CD8-positive, alpha-beta T cell (primary cell): ENCODE measurements at regions of chr2 and their contacts with region 1.

Region 1: GRCh38 chr2:23939987-23940717 is at the start of gene UBXN2A:
- DNase-seq: peak; percentile 53 to 92 (median 70)
- ATAC-seq: peak; percentile 82
- H3K4me3 ChIP-seq: peak within 1 kb of the TSS; percentile 90 to 97
- H3K4me3 Mint-ChIP-seq: peak within 1 kb of the TSS; percentile 94
- H3K27ac ChIP-seq: peak within 1 kb of the TSS; percentile 59 to 64
- H3K27ac Mint-ChIP-seq: peak within 1 kb of the TSS; percentile 88
- H3K4me1 ChIP-seq: peaks cover 6% of the 10 kb centered on the region
- H3K4me1 Mint-ChIP-seq: peaks cover 33% of the 10 kb centered on the region
- H3K27me3 ChIP-seq: no peaks in the 10 kb centered on the region
- H3K27me3 Mint-ChIP-seq: no peaks in the 10 kb centered on the region
- CTCF ChIP-seq: no peak
- total RNA-seq, gene UBXN2A: 17.7 to 18.0 TPM

Region 2: DNA sequence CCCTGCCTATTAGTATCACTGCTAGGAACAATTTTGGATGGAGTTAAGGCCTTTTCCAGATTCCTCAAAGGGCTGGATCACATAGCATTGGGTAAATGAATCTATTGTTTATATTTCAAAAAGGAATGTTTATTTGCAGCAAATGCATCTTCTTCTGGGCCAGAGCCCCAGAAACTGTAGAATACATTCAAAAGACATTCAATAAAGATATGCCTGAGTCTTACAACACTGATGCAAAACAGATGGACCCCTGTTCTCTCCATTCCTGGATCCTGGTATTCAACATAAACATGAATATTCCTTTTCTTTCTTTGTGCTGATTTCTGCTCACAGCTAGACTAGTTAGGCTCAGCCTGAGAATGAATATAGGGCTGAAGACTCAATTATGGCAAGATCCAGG is 782.3 kb before region 1 on chr2:
- CTCF ChIA-PET with region 1: no interaction called
- POLR2A ChIA-PET with region 1: no interaction called
- intact Hi-C with region 1: no loop called
- DNase-seq: no peak
- ATAC-seq: no peak
- H3K4me3 ChIP-seq: no peak overlapping the region
- H3K4me3 Mint-ChIP-seq: no peak overlapping the region
- H3K27ac ChIP-seq: no peak overlapping the region
- H3K27ac Mint-ChIP-seq: no peak overlapping the region
- H3K4me1 ChIP-seq: no peaks in the 10 kb centered on the region
- H3K4me1 Mint-ChIP-seq: no peaks in the 10 kb centered on the region
- H3K27me3 ChIP-seq: no peaks in the 10 kb centered on the region
- H3K27me3 Mint-ChIP-seq: peaks cover 4% of the 10 kb centered on the region
- CTCF ChIP-seq: no peak

Region 3: GRCh38 chr2:24046930-24047702 is 107.0 kb after region 1 on chr2 and contains the start of gene WDCP:
- CTCF ChIA-PET with region 1: no interaction called
- POLR2A ChIA-PET with region 1: interaction called, 4 read pairs
- intact Hi-C with region 1: loop called in 1 of 2 experiments (anchors 1 kb)
- DNase-seq: peak; percentile 81 to 98 (median 92)
- ATAC-seq: peak; percentile 98
- H3K4me3 ChIP-seq: peak within 1 kb of the TSS; percentile 80 to 87
- H3K4me3 Mint-ChIP-seq: peak within 1 kb of the TSS; percentile 93
- H3K27ac ChIP-seq: peak within 1 kb of the TSS; percentile 54 to 56
- H3K27ac Mint-ChIP-seq: peak within 1 kb of the TSS; percentile 90
- H3K4me1 ChIP-seq: peaks cover 21% of the 10 kb centered on the region
- H3K4me1 Mint-ChIP-seq: peaks cover 35% of the 10 kb centered on the region
- H3K27me3 ChIP-seq: no peaks in the 10 kb centered on the region
- H3K27me3 Mint-ChIP-seq: peaks cover 2% of the 10 kb centered on the region
- CTCF ChIP-seq: no peak
- total RNA-seq, gene WDCP: 3.7 to 4.8 TPM

Region 4: GRCh38 chr2:24360050-24360962 is 420.2 kb after region 1 on chr2 and contains the start of gene ITSN2:
- CTCF ChIA-PET with region 1: no interaction called
- POLR2A ChIA-PET with region 1: no interaction called
- intact Hi-C with region 1: loop called in 1 of 2 experiments (anchors 5 kb)
- DNase-seq: peak; percentile 63 to 95 (median 82)
- ATAC-seq: peak; percentile 83
- H3K4me3 ChIP-seq: peak within 1 kb of the TSS; percentile 79 to 94
- H3K4me3 Mint-ChIP-seq: peak within 1 kb of the TSS; percentile 96
- H3K27ac ChIP-seq: peak within 1 kb of the TSS; percentile 93 to 95
- H3K27ac Mint-ChIP-seq: peak within 1 kb of the TSS; percentile 95
- H3K4me1 ChIP-seq: peaks cover 20% of the 10 kb centered on the region
- H3K4me1 Mint-ChIP-seq: peaks cover 31% of the 10 kb centered on the region
- H3K27me3 ChIP-seq: no peaks in the 10 kb centered on the region
- H3K27me3 Mint-ChIP-seq: no peaks in the 10 kb centered on the region
- CTCF ChIP-seq: no peak
- total RNA-seq, gene ITSN2: 86.0 to 89.3 TPM